ENCODE measurements at regions of chr2 and their contacts with region 1.

Region 1: GRCh38 chr2:109690822-109691547 is 76.8 kb downstream of the SOWAHC start:
- DNase-seq: peak; percentile 44 to 81
- H3K4me3 ChIP-seq: no peak overlapping the region
- H3K27ac ChIP-seq: peak overlapping the region; percentile 79 to 88
- H3K4me1 ChIP-seq: peaks cover 7 to 60% (median 42%) of the 10 kb centered on the region in 4 donors
- H3K27me3 ChIP-seq: no peaks in the 10 kb centered on the region
- CTCF ChIP-seq: no peak

Region 2: GRCh38 chr2:109613922-109614714 is 76.9 kb before region 1 on chr2 and contains the starts of genes SEPTIN10 and SOWAHC:
- intact Hi-C with region 1: loop called (anchors 10 kb)
- DNase-seq: peak; percentile 98 to 99
- H3K4me3 ChIP-seq: peak within 1 kb of the TSS; percentile 82 to 84
- H3K27ac ChIP-seq: peak within 1 kb of the TSS; percentile 96 to 99
- H3K4me1 ChIP-seq: peaks cover 0 to 73% (median 38%) of the 10 kb centered on the region in 4 donors
- H3K27me3 ChIP-seq: no peaks in the 10 kb centered on the region
- CTCF ChIP-seq: peak in 1 of 2 experiments; percentile 23

Region 3: DNA sequence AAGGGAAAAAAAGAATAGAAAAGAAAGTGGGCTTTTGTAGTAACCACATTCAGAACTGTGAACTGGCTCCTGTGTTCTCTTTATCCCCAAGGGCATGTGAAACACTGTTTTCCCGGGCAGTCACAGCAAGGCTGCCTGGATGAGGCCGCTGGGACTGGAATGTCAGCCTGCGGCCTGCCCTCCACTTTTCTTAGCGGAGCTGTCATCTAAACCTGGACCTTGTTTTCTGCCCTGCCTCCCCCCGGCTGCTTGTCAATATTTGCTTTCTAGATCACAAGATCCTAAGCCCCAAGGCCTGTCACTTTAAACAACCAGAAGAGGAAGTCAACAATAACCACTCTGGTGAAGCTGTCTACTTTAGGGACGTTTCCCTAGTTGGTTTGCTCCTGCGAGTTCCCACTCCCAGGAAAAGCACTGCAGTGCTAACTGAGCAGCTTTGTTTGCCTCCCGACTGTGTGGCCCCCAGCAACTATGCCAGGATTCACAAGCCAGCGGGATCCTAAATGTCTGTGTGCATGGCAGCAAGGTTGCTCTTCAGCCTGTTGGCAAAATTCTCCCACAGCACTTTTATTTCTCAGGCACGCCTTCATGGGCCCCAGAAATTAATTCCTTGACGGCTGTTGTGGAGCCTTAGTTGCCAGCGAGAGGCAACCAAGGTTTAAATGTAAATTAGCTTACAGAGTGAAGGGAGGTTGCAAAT is 46.3 kb before region 1 on chr2:
- intact Hi-C with region 1: loop called (anchors 10 kb)
- DNase-seq: peak in 1 of 2 donors; percentile 77
- H3K4me3 ChIP-seq: no peak overlapping the region
- H3K27ac ChIP-seq: peak overlapping the region; percentile 81 to 84
- H3K4me1 ChIP-seq: peaks cover 0 to 44% (median 36%) of the 10 kb centered on the region in 4 donors
- H3K27me3 ChIP-seq: no peaks in the 10 kb centered on the region
- CTCF ChIP-seq: no peak

Region 4: GRCh38 chr2:109676346-109676902 is 14.6 kb before region 1 on chr2:
- intact Hi-C with region 1: no loop called
- DNase-seq: no peak
- H3K4me3 ChIP-seq: no peak overlapping the region
- H3K27ac ChIP-seq: no peak overlapping the region
- H3K4me1 ChIP-seq: peaks cover 0 to 9% (median 0%) of the 10 kb centered on the region in 4 donors
- H3K27me3 ChIP-seq: no peaks in the 10 kb centered on the region
- CTCF ChIP-seq: no peak